IMR-90 (cell line): ENCODE measurements at regions of chrX and their contacts with region 1.

Region 1: GRCh38 chrX:65581661-65582339 is 47.2 kb upstream of the LAS1L start:
- DNase-seq: peak; percentile 61
- ATAC-seq: peak; percentile 93
- H3K4me3 ChIP-seq: no peak overlapping the region
- H3K27ac ChIP-seq: no peak overlapping the region
- H3K4me1 ChIP-seq: no peaks in the 10 kb centered on the region
- H3K27me3 ChIP-seq: peaks cover 4% of the 10 kb centered on the region
- CTCF ChIP-seq: peak; percentile 89
- POLR2A ChIP-seq: no peak
- RAD21 ChIP-seq: peak; percentile 94

Region 2: GRCh38 chrX:65846974-65847373 is 265.2 kb after region 1 on chrX:
- CTCF ChIA-PET with region 1: no interaction called
- POLR2A ChIA-PET with region 1: no interaction called
- dilution Hi-C with region 1: no loop called
- in situ Hi-C with region 1: no loop called
- intact Hi-C with region 1: no loop called
- DNase-seq: no peak
- ATAC-seq: no peak
- H3K4me3 ChIP-seq: no peak overlapping the region
- H3K27ac ChIP-seq: no peak overlapping the region
- H3K4me1 ChIP-seq: no peaks in the 10 kb centered on the region
- H3K27me3 ChIP-seq: peaks cover 2% of the 10 kb centered on the region
- CTCF ChIP-seq: no peak
- POLR2A ChIP-seq: no peak
- RAD21 ChIP-seq: no peak

Region 3: DNA sequence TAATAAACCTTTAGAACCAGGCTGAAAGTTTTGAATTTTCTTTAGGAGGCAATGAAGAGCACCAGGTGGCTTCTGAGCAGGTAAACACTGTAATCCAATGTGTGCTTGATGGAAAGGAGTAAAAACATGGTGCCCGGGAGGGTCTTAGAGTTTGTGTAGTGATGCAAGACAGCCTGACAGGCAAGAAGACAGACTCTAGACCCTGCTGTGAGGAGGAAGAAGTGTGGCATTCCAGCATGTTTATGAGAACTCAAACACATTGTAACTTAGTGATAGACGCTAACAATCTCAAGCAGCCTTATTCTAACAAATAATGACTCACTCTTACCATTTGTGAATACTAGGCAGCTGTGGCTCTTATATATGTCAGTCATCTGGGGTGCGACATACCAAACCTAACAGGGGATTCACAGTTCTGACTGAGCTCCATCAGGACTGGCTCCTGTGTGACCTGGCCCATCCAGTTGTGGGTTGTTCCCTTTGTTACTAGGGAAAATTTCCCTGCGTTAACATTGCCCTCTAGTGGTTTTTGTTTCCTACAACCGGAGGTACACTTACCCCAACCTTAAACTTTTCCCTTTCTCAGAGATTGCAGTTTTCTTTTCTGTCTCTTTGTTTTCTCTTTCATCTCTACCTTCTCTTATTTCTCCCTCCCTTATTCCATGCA is 404.3 kb after region 1 on chrX:
- CTCF ChIA-PET with region 1: interaction called, 3 read pairs
- POLR2A ChIA-PET with region 1: no interaction called
- dilution Hi-C with region 1: no loop called
- in situ Hi-C with region 1: loop called (anchors 5 kb)
- intact Hi-C with region 1: loop called (anchors 1 kb)
- DNase-seq: peak; percentile 47
- ATAC-seq: peak; percentile 85
- H3K4me3 ChIP-seq: no peak overlapping the region
- H3K27ac ChIP-seq: no peak overlapping the region
- H3K4me1 ChIP-seq: no peaks in the 10 kb centered on the region
- H3K27me3 ChIP-seq: peaks cover 2% of the 10 kb centered on the region; the same call in 1 of the 2 replicates
- CTCF ChIP-seq: peak; percentile 62
- POLR2A ChIP-seq: no peak
- RAD21 ChIP-seq: peak; percentile 76

Region 4: GRCh38 chrX:65994519-65995506 is 413.0 kb after region 1 on chrX:
- CTCF ChIA-PET with region 1: interaction called, 4 read pairs
- POLR2A ChIA-PET with region 1: no interaction called
- dilution Hi-C with region 1: no loop called
- in situ Hi-C with region 1: loop called (anchors 5 kb)
- intact Hi-C with region 1: no loop called
- DNase-seq: no peak
- ATAC-seq: no peak
- H3K4me3 ChIP-seq: no peak overlapping the region
- H3K27ac ChIP-seq: no peak overlapping the region
- H3K4me1 ChIP-seq: no peaks in the 10 kb centered on the region
- H3K27me3 ChIP-seq: peaks cover 4% of the 10 kb centered on the region
- CTCF ChIP-seq: no peak
- POLR2A ChIP-seq: no peak
- RAD21 ChIP-seq: no peak

Region 5: DNA sequence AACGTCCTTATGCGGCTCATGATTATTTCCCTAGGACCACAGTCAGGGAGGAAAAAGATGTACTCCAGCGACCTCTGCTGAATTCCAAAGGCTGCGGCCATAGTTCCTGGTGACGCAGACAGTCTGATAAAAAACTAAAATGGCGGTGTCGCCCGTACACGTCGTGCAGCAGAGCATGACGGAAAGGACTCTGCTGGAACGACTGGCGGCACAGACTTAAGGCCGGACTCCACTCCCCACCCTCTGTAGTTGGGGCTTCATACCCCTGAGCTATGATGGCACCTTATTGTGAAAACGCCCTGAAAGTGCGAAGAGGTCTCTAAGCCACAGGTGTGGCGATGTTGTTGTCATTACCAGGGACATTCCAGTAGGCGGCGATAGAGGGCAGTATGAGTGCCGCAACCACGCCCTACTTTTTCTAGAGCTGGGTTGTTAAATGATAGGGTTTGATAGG is 1147.0 kb after region 1 on chrX:
- CTCF ChIA-PET with region 1: interaction called, 4 read pairs
- POLR2A ChIA-PET with region 1: no interaction called
- dilution Hi-C with region 1: no loop called
- in situ Hi-C with region 1: loop called (anchors 10 kb)
- intact Hi-C with region 1: no loop called
- DNase-seq: peak; percentile 59
- ATAC-seq: peak; percentile 91
- H3K4me3 ChIP-seq: peak overlapping the region; percentile 97
- H3K27ac ChIP-seq: no peak overlapping the region
- H3K4me1 ChIP-seq: no peaks in the 10 kb centered on the region
- H3K27me3 ChIP-seq: no peaks in the 10 kb centered on the region
- CTCF ChIP-seq: peak; percentile 53
- POLR2A ChIP-seq: no peak
- RAD21 ChIP-seq: peak; percentile 69